ENCODE measurements at regions of chr1 and their contacts with region 1.

Region 1: GRCh38 chr1:21255278-21255942 is 34.9 kb downstream of the ECE1 start:
- DNase-seq: peak; percentile 85
- ATAC-seq: peak; percentile 77
- H3K4me3 ChIP-seq: no peak overlapping the region
- H3K4me3 Mint-ChIP-seq: no peak overlapping the region
- H3K27ac ChIP-seq: no peak overlapping the region
- H3K27ac Mint-ChIP-seq: peak overlapping the region; percentile 79
- H3K4me1 ChIP-seq: peaks cover 9 to 19% of the 10 kb centered on the region in 2 donors
- H3K4me1 Mint-ChIP-seq: peaks cover 20% of the 10 kb centered on the region
- H3K27me3 ChIP-seq: no peaks in the 10 kb centered on the region
- H3K27me3 Mint-ChIP-seq: no peaks in the 10 kb centered on the region
- CTCF ChIP-seq: peak; percentile 82

Region 2: GRCh38 chr1:21244986-21245687 is 10.3 kb before region 1 on chr1:
- CTCF ChIA-PET with region 1: interaction called, 29 read pairs
- POLR2A ChIA-PET with region 1: no interaction called
- intact Hi-C with region 1: no loop called
- DNase-seq: no peak
- ATAC-seq: no peak
- H3K4me3 ChIP-seq: no peak overlapping the region
- H3K4me3 Mint-ChIP-seq: no peak overlapping the region
- H3K27ac ChIP-seq: no peak overlapping the region
- H3K27ac Mint-ChIP-seq: no peak overlapping the region
- H3K4me1 ChIP-seq: no peaks in the 10 kb centered on the region
- H3K4me1 Mint-ChIP-seq: no peaks in the 10 kb centered on the region
- H3K27me3 ChIP-seq: no peaks in the 10 kb centered on the region
- H3K27me3 Mint-ChIP-seq: no peaks in the 10 kb centered on the region
- CTCF ChIP-seq: peak; percentile 49

Region 3: GRCh38 chr1:21280011-21280471 is 24.6 kb after region 1 on chr1:
- CTCF ChIA-PET with region 1: interaction called, 92 read pairs
- POLR2A ChIA-PET with region 1: no interaction called
- intact Hi-C with region 1: no loop called
- DNase-seq: no peak
- ATAC-seq: peak; percentile 35
- H3K4me3 ChIP-seq: peak overlapping the region in 2 of 5 experiments; percentile 7 to 51
- H3K4me3 Mint-ChIP-seq: peak overlapping the region; percentile 58
- H3K27ac ChIP-seq: peak overlapping the region; percentile 7 to 71
- H3K27ac Mint-ChIP-seq: peak overlapping the region; percentile 89
- H3K4me1 ChIP-seq: peaks cover 26 to 28% of the 10 kb centered on the region in 2 donors
- H3K4me1 Mint-ChIP-seq: peaks cover 38% of the 10 kb centered on the region
- H3K27me3 ChIP-seq: no peaks in the 10 kb centered on the region
- H3K27me3 Mint-ChIP-seq: no peaks in the 10 kb centered on the region
- CTCF ChIP-seq: no peak

Region 4: GRCh38 chr1:21302747-21303715 is 47.6 kb after region 1 on chr1:
- CTCF ChIA-PET with region 1: interaction called, 18 read pairs
- POLR2A ChIA-PET with region 1: no interaction called
- intact Hi-C with region 1: no loop called
- DNase-seq: no peak
- ATAC-seq: no peak
- H3K4me3 ChIP-seq: no peak overlapping the region
- H3K4me3 Mint-ChIP-seq: no peak overlapping the region
- H3K27ac ChIP-seq: no peak overlapping the region
- H3K27ac Mint-ChIP-seq: peak overlapping the region; percentile 37
- H3K4me1 ChIP-seq: peaks cover 29 to 49% of the 10 kb centered on the region in 2 donors
- H3K4me1 Mint-ChIP-seq: peaks cover 69% of the 10 kb centered on the region
- H3K27me3 ChIP-seq: no peaks in the 10 kb centered on the region
- H3K27me3 Mint-ChIP-seq: no peaks in the 10 kb centered on the region
- CTCF ChIP-seq: no peak

Region 5: GRCh38 chr1:21334214-21335087 is 79.0 kb after region 1 on chr1:
- CTCF ChIA-PET with region 1: interaction called, 90 read pairs
- POLR2A ChIA-PET with region 1: no interaction called
- intact Hi-C with region 1: loop called (anchors 1 kb)
- DNase-seq: peak; percentile 93
- ATAC-seq: peak; percentile 86
- H3K4me3 ChIP-seq: peak overlapping the region in 4 of 5 experiments; percentile 49 to 69 (median 56)
- H3K4me3 Mint-ChIP-seq: peak overlapping the region; percentile 87
- H3K27ac ChIP-seq: peak overlapping the region; percentile 90 to 95
- H3K27ac Mint-ChIP-seq: peak overlapping the region; percentile 98
- H3K4me1 ChIP-seq: peaks cover 54 to 73% of the 10 kb centered on the region in 2 donors
- H3K4me1 Mint-ChIP-seq: peaks cover 83% of the 10 kb centered on the region
- H3K27me3 ChIP-seq: no peaks in the 10 kb centered on the region
- H3K27me3 Mint-ChIP-seq: no peaks in the 10 kb centered on the region
- CTCF ChIP-seq: peak; percentile 72

Region 6: GRCh38 chr1:21361506-21361905 is 106.1 kb after region 1 on chr1:
- CTCF ChIA-PET with region 1: interaction called, 562 read pairs
- POLR2A ChIA-PET with region 1: no interaction called
- intact Hi-C with region 1: no loop called
- DNase-seq: no peak
- ATAC-seq: no peak
- H3K4me3 ChIP-seq: no peak overlapping the region
- H3K4me3 Mint-ChIP-seq: no peak overlapping the region
- H3K27ac ChIP-seq: no peak overlapping the region
- H3K27ac Mint-ChIP-seq: no peak overlapping the region
- H3K4me1 ChIP-seq: peaks cover 10 to 14% of the 10 kb centered on the region in 2 donors
- H3K4me1 Mint-ChIP-seq: peaks cover 16% of the 10 kb centered on the region
- H3K27me3 ChIP-seq: no peaks in the 10 kb centered on the region
- H3K27me3 Mint-ChIP-seq: no peaks in the 10 kb centered on the region
- CTCF ChIP-seq: no peak